CD8-positive, alpha-beta T cell (primary cell): ENCODE measurements at regions of chr17 and their contacts with region 1.

Region 1: DNA sequence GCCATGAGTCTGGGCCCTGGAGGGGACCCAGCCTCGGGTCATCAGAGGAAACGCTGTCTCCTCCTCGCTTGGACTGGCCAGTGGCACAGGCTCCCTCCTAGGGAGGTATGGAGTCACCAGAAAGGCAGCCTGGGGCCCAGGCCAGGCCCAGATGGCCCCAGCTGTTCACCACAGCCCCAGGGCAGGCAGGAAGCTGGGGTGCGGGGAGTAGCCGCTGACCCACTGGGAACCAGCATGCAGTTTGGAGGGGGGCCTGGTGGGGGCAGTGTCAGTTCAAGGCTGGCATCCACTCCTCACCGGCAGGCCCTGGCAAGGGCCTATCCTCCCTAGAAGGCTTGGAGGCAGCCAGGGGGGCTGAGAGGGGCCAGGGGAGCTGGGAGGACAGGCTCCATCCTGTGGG is 48.8 kb downstream of the SDK2 start:
- DNase-seq: peak in 6 of 9 experiments; percentile 18 to 70 (median 39)
- ATAC-seq: no peak
- H3K4me3 ChIP-seq: no peak overlapping the region
- H3K4me3 Mint-ChIP-seq: no peak overlapping the region
- H3K27ac ChIP-seq: peak overlapping the region in 1 of 2 experiments; percentile 8
- H3K27ac Mint-ChIP-seq: peak overlapping the region; percentile 41
- H3K4me1 ChIP-seq: peaks cover 65% of the 10 kb centered on the region
- H3K4me1 Mint-ChIP-seq: peaks cover 62% of the 10 kb centered on the region
- H3K27me3 ChIP-seq: peaks cover 0 to 4% of the 10 kb centered on the region in 2 experiments
- H3K27me3 Mint-ChIP-seq: no peaks in the 10 kb centered on the region
- CTCF ChIP-seq: peak; percentile 21

Region 2: DNA sequence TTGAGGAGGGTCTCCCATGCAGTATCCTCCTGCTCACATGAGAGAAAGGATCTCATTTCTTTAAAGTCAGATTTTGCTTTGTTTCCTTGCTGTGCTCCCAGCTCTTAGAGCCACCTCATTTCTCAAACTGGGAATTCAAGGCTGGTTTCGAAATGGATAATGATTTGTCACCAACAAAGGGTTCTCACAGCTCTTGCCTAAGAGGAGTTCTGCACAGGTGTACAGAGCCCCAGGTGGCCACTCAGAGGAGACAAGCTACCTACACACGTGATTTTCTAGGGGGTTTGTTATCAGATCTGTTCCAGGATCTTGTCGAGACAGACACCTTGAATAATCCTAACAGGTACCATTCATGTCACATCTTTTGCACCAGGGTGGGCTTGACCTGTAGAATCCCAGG is 94.0 kb before region 1 on chr17:
- CTCF ChIA-PET with region 1: no interaction called
- POLR2A ChIA-PET with region 1: no interaction called
- intact Hi-C with region 1: no loop called
- DNase-seq: no peak
- ATAC-seq: no peak
- H3K4me3 ChIP-seq: no peak overlapping the region
- H3K4me3 Mint-ChIP-seq: no peak overlapping the region
- H3K27ac ChIP-seq: no peak overlapping the region
- H3K27ac Mint-ChIP-seq: no peak overlapping the region
- H3K4me1 ChIP-seq: no peaks in the 10 kb centered on the region
- H3K4me1 Mint-ChIP-seq: no peaks in the 10 kb centered on the region
- H3K27me3 ChIP-seq: no peaks in the 10 kb centered on the region
- H3K27me3 Mint-ChIP-seq: peaks cover 2% of the 10 kb centered on the region
- CTCF ChIP-seq: no peak

Region 3: GRCh38 chr17:73566905-73567782 is 28.3 kb before region 1 on chr17:
- CTCF ChIA-PET with region 1: interaction called, 4 read pairs
- POLR2A ChIA-PET with region 1: interaction called, 21 read pairs
- intact Hi-C with region 1: loop called in 1 of 2 experiments (anchors 2 kb)
- DNase-seq: peak in 6 of 9 experiments; percentile 23 to 70 (median 38)
- ATAC-seq: peak; percentile 87
- H3K4me3 ChIP-seq: peak overlapping the region in 1 of 2 experiments; percentile 0
- H3K4me3 Mint-ChIP-seq: peak overlapping the region; percentile 32
- H3K27ac ChIP-seq: peak overlapping the region; percentile 36 to 74
- H3K27ac Mint-ChIP-seq: peak overlapping the region; percentile 91
- H3K4me1 ChIP-seq: peaks cover 18% of the 10 kb centered on the region
- H3K4me1 Mint-ChIP-seq: peaks cover 25% of the 10 kb centered on the region
- H3K27me3 ChIP-seq: no peaks in the 10 kb centered on the region
- H3K27me3 Mint-ChIP-seq: no peaks in the 10 kb centered on the region
- CTCF ChIP-seq: no peak

Region 4: GRCh38 chr17:73645050-73645978 is 49.8 kb after region 1 on chr17:
- CTCF ChIA-PET with region 1: interaction called, 46 read pairs
- POLR2A ChIA-PET with region 1: interaction called, 7 read pairs
- intact Hi-C with region 1: loop called (anchors 1 kb)
- DNase-seq: peak in 7 of 9 experiments; percentile 14 to 78 (median 54)
- ATAC-seq: peak; percentile 55
- H3K4me3 ChIP-seq: peak overlapping the region in 1 of 2 experiments; percentile 27
- H3K4me3 Mint-ChIP-seq: peak overlapping the region; percentile 65
- H3K27ac ChIP-seq: no peak overlapping the region
- H3K27ac Mint-ChIP-seq: no peak overlapping the region
- H3K4me1 ChIP-seq: peaks cover 19% of the 10 kb centered on the region
- H3K4me1 Mint-ChIP-seq: peaks cover 30% of the 10 kb centered on the region
- H3K27me3 ChIP-seq: peaks cover 0 to 13% of the 10 kb centered on the region in 2 experiments
- H3K27me3 Mint-ChIP-seq: no peaks in the 10 kb centered on the region
- CTCF ChIP-seq: peak; percentile 26

Region 5: DNA sequence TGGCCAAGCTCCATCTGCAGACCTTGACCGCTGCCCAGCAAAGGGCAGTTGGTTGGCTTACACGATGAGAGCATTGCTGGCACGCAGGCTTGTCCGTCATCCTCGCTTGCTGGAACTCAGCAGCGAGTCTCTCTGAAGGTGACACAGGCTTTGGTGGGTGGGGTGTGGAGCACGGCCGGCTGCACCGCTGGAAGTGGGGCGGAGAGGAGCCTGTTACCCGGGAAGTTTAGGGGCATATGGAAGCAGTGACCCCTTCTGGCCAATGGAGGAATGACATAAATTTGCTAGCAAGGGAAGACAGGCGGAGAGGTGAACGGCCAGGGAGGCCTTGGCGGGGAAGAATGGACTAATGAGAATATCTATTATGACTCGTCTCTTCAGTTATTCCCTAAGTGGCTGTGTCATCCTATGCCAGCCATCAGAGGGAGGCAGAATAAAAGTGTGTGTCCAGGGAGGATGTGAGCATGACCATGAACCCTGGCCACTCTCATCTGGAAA is 114.7 kb after region 1 on chr17:
- CTCF ChIA-PET with region 1: interaction called, 5 read pairs
- POLR2A ChIA-PET with region 1: no interaction called
- intact Hi-C with region 1: loop called in 1 of 2 experiments (anchors 2 kb)
- DNase-seq: peak; percentile 37 to 80 (median 67)
- ATAC-seq: peak; percentile 78
- H3K4me3 ChIP-seq: no peak overlapping the region
- H3K4me3 Mint-ChIP-seq: no peak overlapping the region
- H3K27ac ChIP-seq: no peak overlapping the region
- H3K27ac Mint-ChIP-seq: no peak overlapping the region
- H3K4me1 ChIP-seq: peaks cover 6% of the 10 kb centered on the region
- H3K4me1 Mint-ChIP-seq: peaks cover 12% of the 10 kb centered on the region
- H3K27me3 ChIP-seq: no peaks in the 10 kb centered on the region
- H3K27me3 Mint-ChIP-seq: no peaks in the 10 kb centered on the region
- CTCF ChIP-seq: peak; percentile 82

Region 6: GRCh38 chr17:73719588-73720071 is 124.2 kb after region 1 on chr17:
- CTCF ChIA-PET with region 1: interaction called, 6 read pairs
- POLR2A ChIA-PET with region 1: interaction called, 7 read pairs
- intact Hi-C with region 1: loop called (anchors 2 to 5 kb)
- DNase-seq: no peak
- ATAC-seq: no peak
- H3K4me3 ChIP-seq: no peak overlapping the region
- H3K4me3 Mint-ChIP-seq: peak overlapping the region; percentile 35
- H3K27ac ChIP-seq: no peak overlapping the region
- H3K27ac Mint-ChIP-seq: peak overlapping the region; percentile 89
- H3K4me1 ChIP-seq: peaks cover 48% of the 10 kb centered on the region
- H3K4me1 Mint-ChIP-seq: peaks cover 48% of the 10 kb centered on the region
- H3K27me3 ChIP-seq: no peaks in the 10 kb centered on the region
- H3K27me3 Mint-ChIP-seq: no peaks in the 10 kb centered on the region
- CTCF ChIP-seq: no peak

Region 7: GRCh38 chr17:73748508-73748907 is 153.0 kb after region 1 on chr17:
- CTCF ChIA-PET with region 1: no interaction called
- POLR2A ChIA-PET with region 1: no interaction called
- intact Hi-C with region 1: no loop called
- DNase-seq: no peak
- ATAC-seq: no peak
- H3K4me3 ChIP-seq: no peak overlapping the region
- H3K4me3 Mint-ChIP-seq: no peak overlapping the region
- H3K27ac ChIP-seq: no peak overlapping the region
- H3K27ac Mint-ChIP-seq: no peak overlapping the region
- H3K4me1 ChIP-seq: no peaks in the 10 kb centered on the region
- H3K4me1 Mint-ChIP-seq: no peaks in the 10 kb centered on the region
- H3K27me3 ChIP-seq: no peaks in the 10 kb centered on the region
- H3K27me3 Mint-ChIP-seq: no peaks in the 10 kb centered on the region
- CTCF ChIP-seq: no peak

Region 8: DNA sequence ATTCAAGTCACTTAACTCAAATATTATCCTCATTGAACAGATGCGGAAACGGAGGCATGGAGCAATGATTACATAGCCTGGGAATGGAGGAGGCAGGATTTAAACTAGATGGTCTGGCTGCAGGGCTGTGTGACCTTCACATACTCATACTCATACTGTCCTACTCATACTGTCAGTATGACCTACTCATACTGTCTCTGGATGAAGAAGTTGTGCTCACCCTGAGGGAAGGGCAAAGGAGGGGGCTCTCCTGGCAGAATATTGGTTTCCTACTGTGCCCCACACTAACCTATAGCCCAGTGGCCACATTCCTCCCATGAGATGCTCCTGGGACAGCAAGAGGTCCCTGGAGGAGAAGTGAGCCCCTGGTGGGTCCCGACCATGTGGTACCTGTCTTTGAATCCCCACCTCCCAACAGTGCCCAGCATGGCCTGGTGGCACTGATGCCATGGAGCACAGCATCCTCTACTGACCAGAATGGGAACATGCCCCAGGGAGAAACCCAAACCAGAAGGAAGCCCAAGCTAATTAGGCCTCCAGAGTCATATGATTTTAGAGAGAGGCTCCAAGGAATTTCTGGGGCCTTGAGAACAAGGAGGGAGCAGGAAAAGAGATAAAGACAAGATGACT is 246.1 kb after region 1 on chr17:
- CTCF ChIA-PET with region 1: no interaction called
- POLR2A ChIA-PET with region 1: no interaction called
- intact Hi-C with region 1: loop called in 1 of 2 experiments (anchors 2 kb)
- DNase-seq: peak in 2 of 9 experiments; percentile 30 to 56
- ATAC-seq: peak; percentile 51
- H3K4me3 ChIP-seq: no peak overlapping the region
- H3K4me3 Mint-ChIP-seq: no peak overlapping the region
- H3K27ac ChIP-seq: no peak overlapping the region
- H3K27ac Mint-ChIP-seq: no peak overlapping the region
- H3K4me1 ChIP-seq: no peaks in the 10 kb centered on the region
- H3K4me1 Mint-ChIP-seq: peaks cover 3% of the 10 kb centered on the region
- H3K27me3 ChIP-seq: no peaks in the 10 kb centered on the region
- H3K27me3 Mint-ChIP-seq: no peaks in the 10 kb centered on the region
- CTCF ChIP-seq: peak; percentile 18

Region 9: GRCh38 chr17:73956669-73957465 is 361.4 kb after region 1 on chr17:
- CTCF ChIA-PET with region 1: no interaction called
- POLR2A ChIA-PET with region 1: no interaction called
- intact Hi-C with region 1: loop called in 1 of 2 experiments (anchors 10 kb)
- DNase-seq: peak; percentile 13 to 77 (median 53)
- ATAC-seq: peak; percentile 54
- H3K4me3 ChIP-seq: no peak overlapping the region
- H3K4me3 Mint-ChIP-seq: no peak overlapping the region
- H3K27ac ChIP-seq: no peak overlapping the region
- H3K27ac Mint-ChIP-seq: no peak overlapping the region
- H3K4me1 ChIP-seq: peaks cover 4% of the 10 kb centered on the region
- H3K4me1 Mint-ChIP-seq: peaks cover 3% of the 10 kb centered on the region
- H3K27me3 ChIP-seq: peaks cover 9 to 23% of the 10 kb centered on the region in 2 experiments
- H3K27me3 Mint-ChIP-seq: peaks cover 3% of the 10 kb centered on the region
- CTCF ChIP-seq: peak; percentile 35